ENCODE measurements at regions of chr5 and their contacts with region 1.

Region 1: GRCh38 chr5:132866342-132867045 is at the starts of genes GDF9 and UQCRQ:
- DNase-seq: peak; percentile 100
- ATAC-seq: peak; percentile 97
- H3K4me3 ChIP-seq: peak within 1 kb of the TSS; percentile 74 to 88 (median 87)
- H3K27ac ChIP-seq: peak within 1 kb of the TSS; percentile 86
- H3K4me1 ChIP-seq: peaks cover 60% of the 10 kb centered on the region
- H3K27me3 ChIP-seq: no peaks in the 10 kb centered on the region; a peak in 1 of 5 replicates
- CTCF ChIP-seq: peak; percentile 95
- EP300 ChIP-seq: peak in 1 of 2 experiments; percentile 54; a peak in 1 of 4 replicates
- POLR2A ChIP-seq: peak; percentile 90 to 95
- RAD21 ChIP-seq: peak; percentile 92
- total RNA-seq, gene GDF9: 0.07 and 0.38 TPM in 2 replicates
- total RNA-seq, gene UQCRQ: 575 and 610 TPM in 2 replicates

Region 2: DNA sequence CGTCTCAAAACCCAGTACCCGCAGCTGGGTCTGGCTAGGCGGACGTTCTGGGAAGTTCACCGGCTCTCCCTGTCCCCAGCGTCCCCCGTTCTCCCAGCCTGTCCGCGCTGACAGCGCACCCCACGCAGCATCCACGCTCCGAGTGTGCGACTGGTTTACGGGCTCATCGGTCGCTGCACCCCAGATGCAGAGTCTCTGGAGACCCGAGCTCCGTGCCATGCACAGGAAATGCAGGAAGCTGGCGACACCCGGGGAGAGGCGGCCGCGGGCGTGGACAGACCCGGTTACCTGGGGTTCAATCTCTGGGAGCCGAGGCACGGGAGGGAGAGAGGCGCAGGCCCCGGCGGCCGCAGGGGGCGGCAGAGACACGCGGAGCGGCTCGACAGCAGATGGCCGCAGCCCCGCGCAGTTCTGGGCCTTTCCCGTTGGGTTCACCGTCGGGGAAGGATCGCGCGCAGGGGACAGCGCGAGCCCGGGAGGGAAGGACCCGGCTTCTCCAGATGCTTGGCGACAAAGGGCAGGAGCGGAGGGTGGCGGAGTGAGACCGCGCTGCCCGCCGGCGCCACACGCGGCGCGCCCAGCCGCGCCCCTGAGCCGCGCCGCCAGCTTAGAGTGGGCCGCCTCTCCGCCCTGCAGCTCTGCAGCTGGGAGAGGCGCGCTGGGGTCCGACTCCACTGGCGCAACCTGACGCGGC is 36.6 kb before region 1 on chr5:
- CTCF ChIA-PET with region 1: interaction called, 9 read pairs
- POLR2A ChIA-PET with region 1: interaction called, 91 read pairs
- in situ Hi-C with region 1: loop called (anchors 5 kb)
- intact Hi-C with region 1: loop called (anchors 1 kb)
- DNase-seq: peak; percentile 56
- ATAC-seq: peak; percentile 87
- H3K4me3 ChIP-seq: peak overlapping the region; percentile 79 to 94 (median 93)
- H3K27ac ChIP-seq: peak overlapping the region; percentile 90
- H3K4me1 ChIP-seq: peaks cover 61% of the 10 kb centered on the region
- H3K27me3 ChIP-seq: no peaks in the 10 kb centered on the region
- CTCF ChIP-seq: peak; percentile 96
- EP300 ChIP-seq: no peak; a peak in 1 of 4 replicates
- POLR2A ChIP-seq: peak in 1 of 2 experiments; percentile 47; a peak in 1 of 4 replicates
- RAD21 ChIP-seq: peak; percentile 98

Region 3: DNA sequence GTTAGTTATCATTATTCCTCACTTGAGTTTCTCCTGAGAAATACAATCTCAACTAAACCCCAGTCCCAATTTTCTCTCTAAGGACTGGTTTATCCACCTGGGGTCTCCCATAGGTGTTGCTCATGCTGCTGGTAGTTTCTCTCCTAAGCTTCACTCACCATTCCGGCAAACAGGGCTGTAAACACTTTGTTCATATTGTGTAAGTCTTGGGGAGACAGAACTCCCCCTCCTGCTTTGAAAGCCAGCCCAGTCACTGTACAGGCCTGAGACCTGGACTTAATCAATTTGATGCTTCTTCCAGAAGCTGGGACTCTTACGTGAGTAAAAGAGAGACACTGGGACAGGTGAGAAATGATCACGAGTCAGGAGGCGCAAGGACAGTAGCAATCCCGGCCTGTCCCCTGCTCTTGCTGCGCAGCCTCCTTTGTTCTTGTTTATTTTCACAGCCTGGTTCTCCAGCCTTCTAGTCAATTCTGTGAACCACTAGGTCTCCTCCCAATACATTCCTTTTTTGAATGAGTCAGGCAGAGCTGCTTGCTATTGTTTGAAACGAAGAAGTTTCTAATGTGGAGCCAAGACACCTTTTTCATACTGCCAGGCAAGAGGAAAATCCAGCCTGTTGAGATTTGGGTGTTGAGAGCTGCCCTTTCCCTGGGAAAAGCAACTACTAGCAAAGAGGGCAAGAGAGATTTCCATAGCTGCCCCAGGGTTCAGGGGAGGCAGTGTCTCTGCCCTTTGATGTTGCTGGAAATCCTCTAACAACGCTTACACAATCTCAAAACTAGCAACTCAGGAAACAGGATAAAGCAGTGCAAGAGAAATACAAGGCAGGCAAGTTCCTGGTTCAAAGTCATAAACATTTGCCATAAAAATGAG is 26.8 kb before region 1 on chr5:
- CTCF ChIA-PET with region 1: no interaction called
- POLR2A ChIA-PET with region 1: interaction called, 43 read pairs
- in situ Hi-C with region 1: loop called (anchors 5 kb)
- intact Hi-C with region 1: no loop called
- DNase-seq: peak; percentile 89
- ATAC-seq: peak; percentile 72
- H3K4me3 ChIP-seq: peak overlapping the region; percentile 36 to 68 (median 48); a peak in 5 of 6 replicates
- H3K27ac ChIP-seq: peak overlapping the region; percentile 98
- H3K4me1 ChIP-seq: peaks cover 81% of the 10 kb centered on the region
- H3K27me3 ChIP-seq: no peaks in the 10 kb centered on the region
- CTCF ChIP-seq: peak; percentile 9; the same call in 1 of the 2 replicates
- EP300 ChIP-seq: peak; percentile 43 to 91; a peak in 2 of 4 replicates
- POLR2A ChIP-seq: peak; percentile 55 to 57; a peak in 3 of 4 replicates
- RAD21 ChIP-seq: no peak

Region 4: DNA sequence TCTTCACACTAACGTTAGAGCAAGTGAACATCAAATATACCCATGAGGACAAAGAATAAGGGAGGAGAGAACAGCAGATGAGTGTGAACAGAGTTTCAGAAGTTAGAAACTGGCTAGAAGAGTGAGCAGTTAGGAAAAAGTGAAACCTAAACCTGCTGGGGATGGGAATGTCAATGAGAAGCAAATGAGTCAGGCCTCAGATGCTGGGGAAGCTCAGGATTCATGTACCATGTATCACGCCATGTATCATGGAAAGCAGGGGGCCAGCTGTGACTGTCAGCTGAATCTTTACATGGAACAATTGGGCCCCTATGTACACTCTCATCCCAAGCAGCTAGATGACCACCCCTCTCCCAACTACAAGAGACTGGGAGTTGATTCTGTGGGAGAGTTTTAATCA is 16.4 kb before region 1 on chr5:
- CTCF ChIA-PET with region 1: no interaction called
- POLR2A ChIA-PET with region 1: interaction called, 20 read pairs
- in situ Hi-C with region 1: no loop called
- intact Hi-C with region 1: no loop called
- DNase-seq: no peak
- ATAC-seq: no peak; the same call in 2 of the 3 replicates
- H3K4me3 ChIP-seq: no peak overlapping the region
- H3K27ac ChIP-seq: peak overlapping the region; percentile 59
- H3K4me1 ChIP-seq: peaks cover 75% of the 10 kb centered on the region
- H3K27me3 ChIP-seq: no peaks in the 10 kb centered on the region
- CTCF ChIP-seq: no peak
- EP300 ChIP-seq: no peak
- POLR2A ChIP-seq: no peak
- RAD21 ChIP-seq: no peak

Region 5: GRCh38 chr5:132883261-132883834 is 16.9 kb after region 1 on chr5:
- CTCF ChIA-PET with region 1: interaction called, 7 read pairs
- POLR2A ChIA-PET with region 1: interaction called, 10 read pairs
- in situ Hi-C with region 1: no loop called
- intact Hi-C with region 1: no loop called
- DNase-seq: peak; percentile 78
- ATAC-seq: peak; percentile 94
- H3K4me3 ChIP-seq: no peak overlapping the region
- H3K27ac ChIP-seq: peak overlapping the region; percentile 16
- H3K4me1 ChIP-seq: peaks cover 17% of the 10 kb centered on the region
- H3K27me3 ChIP-seq: no peaks in the 10 kb centered on the region
- CTCF ChIP-seq: peak; percentile 85
- EP300 ChIP-seq: no peak
- POLR2A ChIP-seq: no peak
- RAD21 ChIP-seq: peak; percentile 81